ENCODE measurements at regions of chr4 and their contacts with region 1.

Region 1: GRCh38 chr4:147019061-147019460 is 73.4 kb upstream of the TTC29 start:
- DNase-seq: peak; percentile 71
- H3K4me3 ChIP-seq: no peak overlapping the region
- H3K27ac ChIP-seq: no peak overlapping the region
- H3K4me1 ChIP-seq: no peaks in the 10 kb centered on the region
- H3K27me3 ChIP-seq: no peaks in the 10 kb centered on the region
- CTCF ChIP-seq: peak; percentile 72

Region 2: DNA sequence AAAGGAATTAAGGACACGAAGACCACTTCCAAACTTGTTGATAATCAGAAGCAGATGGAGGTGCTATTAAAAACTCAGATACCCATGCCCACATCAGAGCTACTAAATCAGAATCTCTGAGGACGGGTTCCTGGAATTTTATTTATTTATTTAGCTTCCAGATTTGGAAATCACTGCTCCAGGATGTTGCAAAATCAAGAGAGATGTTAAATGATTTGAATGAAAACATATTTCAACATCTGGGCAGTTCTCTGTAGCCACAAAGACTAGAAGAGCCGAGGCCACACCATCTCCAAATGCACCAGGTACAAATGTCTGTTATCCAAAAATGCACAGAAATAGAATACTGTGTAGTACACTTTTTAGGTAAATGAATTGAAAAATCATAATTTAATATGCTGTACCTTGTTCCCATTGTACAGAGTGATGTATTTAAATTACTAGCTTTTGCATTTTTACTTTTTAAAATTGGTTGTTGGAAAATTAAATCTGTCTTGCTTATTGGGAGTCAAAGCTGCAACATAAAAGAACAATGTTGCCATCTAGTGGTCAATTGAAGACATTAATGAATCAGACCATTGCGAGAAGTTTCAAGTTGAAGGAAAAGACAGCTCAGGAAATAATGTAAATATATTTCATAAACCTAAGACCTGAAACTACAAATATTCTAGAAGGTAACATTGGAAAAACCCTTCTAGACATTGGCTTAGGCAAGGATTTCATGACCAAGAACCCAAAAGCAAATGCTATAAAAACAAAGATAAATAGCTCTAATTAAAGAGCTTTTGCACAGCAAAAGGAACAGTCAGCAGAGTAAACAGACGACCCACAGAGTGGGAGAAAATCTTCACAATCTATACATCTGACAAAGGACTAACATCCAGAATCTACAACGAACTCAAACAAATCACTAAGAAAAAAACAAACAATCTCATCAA is 77.9 kb after region 1 on chr4:
- CTCF ChIA-PET with region 1: interaction called, 25 read pairs
- POLR2A ChIA-PET with region 1: interaction called, 3 read pairs
- intact Hi-C with region 1: loop called (anchors 2 kb)
- DNase-seq: peak; percentile 71
- H3K4me3 ChIP-seq: no peak overlapping the region
- H3K27ac ChIP-seq: no peak overlapping the region
- H3K4me1 ChIP-seq: no peaks in the 10 kb centered on the region
- H3K27me3 ChIP-seq: no peaks in the 10 kb centered on the region
- CTCF ChIP-seq: peak; percentile 72